ENCODE measurements at regions of chr3 and their contacts with region 1.

Region 1: DNA sequence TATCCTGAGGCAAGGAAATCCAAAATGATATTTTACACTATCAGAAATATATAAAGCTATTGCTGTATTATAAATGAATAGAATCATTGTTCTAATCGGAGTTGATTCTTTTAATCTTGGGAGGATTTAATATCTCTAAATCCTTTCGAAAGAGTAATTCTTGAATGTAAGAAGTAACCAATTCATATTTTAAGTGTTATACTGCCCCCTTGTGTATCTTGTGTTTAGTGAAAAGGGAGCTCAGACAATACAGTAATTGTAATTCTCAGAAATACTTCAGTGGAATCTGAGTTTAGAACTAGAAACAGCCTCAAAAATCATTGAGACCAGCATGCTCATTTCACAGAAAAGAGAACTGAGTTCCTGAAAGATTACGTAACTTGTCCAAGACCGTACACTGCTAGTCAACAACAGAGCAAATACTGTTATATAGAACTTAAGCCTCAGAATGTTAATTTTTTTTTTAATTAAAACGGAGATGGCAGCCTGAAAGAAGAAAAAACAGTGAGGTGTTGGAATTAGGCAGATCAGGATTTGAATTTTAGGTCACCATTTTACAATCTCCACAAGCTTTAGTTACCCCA is 42.9 kb downstream of the PLCH1 start:
- DNase-seq: peak; percentile 43
- H3K4me3 ChIP-seq: no peak overlapping the region; a peak in 1 of 4 replicates
- H3K27ac ChIP-seq: no peak overlapping the region
- H3K4me1 ChIP-seq: peaks cover 0 to 3% of the 10 kb centered on the region in 2 experiments; a peak in 2 of 4 replicates
- H3K27me3 ChIP-seq: no peaks in the 10 kb centered on the region
- CTCF ChIP-seq: peak; percentile 82
- EP300 ChIP-seq: no peak
- RAD21 ChIP-seq: peak; percentile 82

Region 2: GRCh38 chr3:155334914-155335723 is 366.9 kb before region 1 on chr3:
- CTCF ChIA-PET with region 1: interaction called, 11 read pairs
- POLR2A ChIA-PET with region 1: no interaction called
- DNase-seq: peak; percentile 19
- H3K4me3 ChIP-seq: no peak overlapping the region; a peak in 1 of 4 replicates
- H3K27ac ChIP-seq: peak overlapping the region in 1 of 2 experiments; percentile 98; a peak in 2 of 4 replicates
- H3K4me1 ChIP-seq: peaks cover 0 to 55% of the 10 kb centered on the region in 2 experiments; a peak in 2 of 4 replicates
- H3K27me3 ChIP-seq: no peaks in the 10 kb centered on the region
- CTCF ChIP-seq: no peak
- EP300 ChIP-seq: peak in 1 of 2 experiments; percentile 65; a peak in 2 of 4 replicates
- RAD21 ChIP-seq: no peak; the same call in 1 of the 2 replicates

Region 3: GRCh38 chr3:155370198-155370597 is 331.8 kb before region 1 on chr3:
- CTCF ChIA-PET with region 1: interaction called, 17 read pairs
- POLR2A ChIA-PET with region 1: no interaction called
- DNase-seq: no peak
- H3K4me3 ChIP-seq: no peak overlapping the region
- H3K27ac ChIP-seq: no peak overlapping the region
- H3K4me1 ChIP-seq: peaks cover 0 to 3% of the 10 kb centered on the region in 2 experiments; a peak in 1 of 4 replicates
- H3K27me3 ChIP-seq: no peaks in the 10 kb centered on the region
- CTCF ChIP-seq: no peak
- EP300 ChIP-seq: no peak
- RAD21 ChIP-seq: no peak

Region 4: GRCh38 chr3:155418407-155418806 is 283.6 kb before region 1 on chr3:
- CTCF ChIA-PET with region 1: interaction called, 22 read pairs
- POLR2A ChIA-PET with region 1: no interaction called
- DNase-seq: peak; percentile 68
- H3K4me3 ChIP-seq: no peak overlapping the region
- H3K27ac ChIP-seq: peak overlapping the region in 1 of 2 experiments; percentile 99; a peak in 2 of 4 replicates
- H3K4me1 ChIP-seq: peaks cover 0 to 27% of the 10 kb centered on the region in 2 experiments; a peak in 2 of 4 replicates
- H3K27me3 ChIP-seq: no peaks in the 10 kb centered on the region
- CTCF ChIP-seq: no peak
- EP300 ChIP-seq: peak in 1 of 2 experiments; percentile 97; a peak in 2 of 4 replicates
- RAD21 ChIP-seq: no peak; the same call in none of the 2 replicates

Region 5: GRCh38 chr3:155619118-155619915 is 82.7 kb before region 1 on chr3:
- CTCF ChIA-PET with region 1: no interaction called
- POLR2A ChIA-PET with region 1: no interaction called
- DNase-seq: no peak
- H3K4me3 ChIP-seq: no peak overlapping the region
- H3K27ac ChIP-seq: no peak overlapping the region
- H3K4me1 ChIP-seq: no peaks in the 10 kb centered on the region
- H3K27me3 ChIP-seq: no peaks in the 10 kb centered on the region
- CTCF ChIP-seq: no peak
- EP300 ChIP-seq: no peak
- RAD21 ChIP-seq: no peak

Region 6: DNA sequence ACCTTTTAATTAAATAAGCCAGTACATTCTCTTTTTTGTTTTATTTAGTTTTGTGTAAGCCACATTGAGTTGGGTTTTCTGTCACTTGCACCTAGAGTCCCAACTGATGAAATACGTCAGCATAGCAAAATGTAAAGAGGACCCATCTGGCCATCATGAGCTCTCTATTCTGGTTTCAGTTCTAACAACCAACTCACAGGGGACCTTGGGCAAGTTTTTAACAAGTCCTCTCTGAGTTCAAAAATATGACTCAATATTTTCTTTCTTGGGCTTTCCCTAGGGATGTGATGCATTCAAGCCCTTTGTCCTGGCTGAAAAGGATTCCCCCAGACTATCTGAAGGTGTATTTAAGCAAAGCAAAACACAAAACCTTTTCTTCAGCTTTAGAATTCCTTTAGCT is 10.0 kb after region 1 on chr3:
- CTCF ChIA-PET with region 1: interaction called, 33 read pairs
- POLR2A ChIA-PET with region 1: no interaction called
- DNase-seq: no peak
- H3K4me3 ChIP-seq: no peak overlapping the region
- H3K27ac ChIP-seq: no peak overlapping the region
- H3K4me1 ChIP-seq: no peaks in the 10 kb centered on the region; a peak in 1 of 4 replicates
- H3K27me3 ChIP-seq: no peaks in the 10 kb centered on the region
- CTCF ChIP-seq: no peak
- EP300 ChIP-seq: no peak
- RAD21 ChIP-seq: no peak